ENCODE measurements at regions of chr14 and their contacts with region 1.

Region 1: GRCh38 chr14:105944632-105945610 is 418.5 kb downstream of the TMEM121 start:
- DNase-seq: peak; percentile 84
- ATAC-seq: peak; percentile 81
- H3K4me3 Mint-ChIP-seq: no peak overlapping the region
- H3K27ac Mint-ChIP-seq: no peak overlapping the region
- H3K4me1 Mint-ChIP-seq: peaks cover 17% of the 10 kb centered on the region
- H3K27me3 Mint-ChIP-seq: peaks cover 13% of the 10 kb centered on the region

Region 2: GRCh38 chr14:105682940-105683570 is 261.9 kb before region 1 on chr14:
- CTCF ChIA-PET with region 1: interaction called, 25 read pairs
- DNase-seq: peak; percentile 41
- ATAC-seq: no peak
- H3K4me3 Mint-ChIP-seq: no peak overlapping the region
- H3K27ac Mint-ChIP-seq: no peak overlapping the region
- H3K4me1 Mint-ChIP-seq: no peaks in the 10 kb centered on the region
- H3K27me3 Mint-ChIP-seq: no peaks in the 10 kb centered on the region

Region 3: DNA sequence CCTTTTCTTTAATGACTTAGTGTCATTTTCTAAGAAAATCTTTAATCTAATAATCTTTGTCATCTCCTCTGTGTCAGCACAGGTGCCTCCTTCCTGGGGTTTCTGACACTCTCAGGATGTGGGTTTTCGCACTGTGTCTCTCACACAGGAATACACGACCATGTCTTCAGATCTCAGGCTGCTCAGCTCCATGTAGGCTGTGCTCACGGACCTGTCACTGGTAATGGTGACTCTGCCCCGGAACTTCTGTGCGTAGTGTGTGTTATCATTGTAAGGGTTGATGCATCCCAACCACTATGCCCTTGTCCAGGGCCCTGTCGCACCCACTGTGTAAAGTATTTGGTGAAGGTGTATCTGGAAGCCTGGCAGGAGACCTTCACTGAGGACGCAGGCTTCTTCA is 229.3 kb after region 1 on chr14:
- CTCF ChIA-PET with region 1: no interaction called
- DNase-seq: peak; percentile 81
- ATAC-seq: peak; percentile 51
- H3K4me3 Mint-ChIP-seq: peak overlapping the region; percentile 11
- H3K27ac Mint-ChIP-seq: peak overlapping the region; percentile 63
- H3K4me1 Mint-ChIP-seq: peaks cover 52% of the 10 kb centered on the region
- H3K27me3 Mint-ChIP-seq: peaks cover 54% of the 10 kb centered on the region

Measured in activated CD8-positive, alpha-beta memory T cell treated with anti-CD3 and anti-CD28 coated beads, Interleukin-2, amount 10 ng/mL, durations not matched to agents 7 days and 5 days (primary cell).